ENCODE measurements at regions of chr3 and their contacts with region 1.

Region 1: DNA sequence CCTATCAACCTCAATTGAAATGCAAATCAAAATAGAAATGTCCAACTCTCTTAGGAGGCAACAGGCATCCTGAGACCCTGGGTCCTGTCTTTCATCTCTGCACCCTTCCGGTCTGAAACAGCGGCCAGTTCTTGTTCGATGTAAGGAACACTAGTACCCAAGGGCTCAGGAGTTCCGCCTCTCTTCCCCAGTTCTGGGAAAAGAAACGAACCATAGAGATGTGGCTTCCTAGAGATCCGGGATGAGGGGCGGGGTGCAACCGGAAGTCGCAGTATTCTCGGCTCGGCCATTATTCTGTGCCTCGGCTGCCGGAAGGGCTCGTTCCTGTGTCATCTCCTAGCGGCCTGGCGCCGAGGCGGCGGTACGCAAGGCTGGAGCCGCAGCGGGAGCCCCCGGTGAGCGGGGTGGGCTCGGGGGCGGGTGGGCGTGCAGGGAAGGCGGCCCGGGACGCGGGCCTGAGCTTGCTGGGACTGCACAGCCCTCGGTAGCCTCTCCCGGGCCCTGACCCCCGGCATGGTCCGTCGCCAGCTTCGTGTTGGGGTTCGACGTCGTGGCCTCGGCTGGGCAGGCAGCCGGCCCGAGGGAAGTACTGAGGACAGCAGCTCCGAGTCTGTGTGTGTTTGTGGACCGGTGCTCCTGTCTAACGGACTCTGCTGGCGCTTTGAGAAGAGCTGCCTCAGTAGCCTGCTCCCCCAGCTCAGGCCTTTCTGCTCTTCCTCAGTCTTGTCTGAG is at the start of gene ZNF197:
- DNase-seq: peak; percentile 87 to 88
- H3K4me3 ChIP-seq: peak within 1 kb of the TSS; percentile 76
- H3K4me3 Mint-ChIP-seq: peak within 1 kb of the TSS; percentile 76
- H3K27ac Mint-ChIP-seq: peak within 1 kb of the TSS; percentile 5
- H3K4me1 ChIP-seq: peaks cover 5% of the 10 kb centered on the region
- H3K4me1 Mint-ChIP-seq: no peaks in the 10 kb centered on the region
- H3K27me3 ChIP-seq: no peaks in the 10 kb centered on the region
- H3K27me3 Mint-ChIP-seq: no peaks in the 10 kb centered on the region
- CTCF ChIP-seq: peak in 1 of 2 experiments; percentile 4
- total RNA-seq, gene ZNF197: 10.5 and 10.6 TPM in 2 replicates

Region 2: GRCh38 chr3:44439499-44440295 is 185.2 kb before region 1 on chr3:
- CTCF ChIA-PET with region 1: no interaction called
- POLR2A ChIA-PET with region 1: no interaction called
- intact Hi-C with region 1: no loop called
- DNase-seq: no peak
- H3K4me3 ChIP-seq: no peak overlapping the region
- H3K4me3 Mint-ChIP-seq: no peak overlapping the region
- H3K27ac Mint-ChIP-seq: no peak overlapping the region
- H3K4me1 ChIP-seq: peaks cover 5% of the 10 kb centered on the region
- H3K4me1 Mint-ChIP-seq: no peaks in the 10 kb centered on the region
- H3K27me3 ChIP-seq: no peaks in the 10 kb centered on the region
- H3K27me3 Mint-ChIP-seq: no peaks in the 10 kb centered on the region
- CTCF ChIP-seq: no peak

Region 3: DNA sequence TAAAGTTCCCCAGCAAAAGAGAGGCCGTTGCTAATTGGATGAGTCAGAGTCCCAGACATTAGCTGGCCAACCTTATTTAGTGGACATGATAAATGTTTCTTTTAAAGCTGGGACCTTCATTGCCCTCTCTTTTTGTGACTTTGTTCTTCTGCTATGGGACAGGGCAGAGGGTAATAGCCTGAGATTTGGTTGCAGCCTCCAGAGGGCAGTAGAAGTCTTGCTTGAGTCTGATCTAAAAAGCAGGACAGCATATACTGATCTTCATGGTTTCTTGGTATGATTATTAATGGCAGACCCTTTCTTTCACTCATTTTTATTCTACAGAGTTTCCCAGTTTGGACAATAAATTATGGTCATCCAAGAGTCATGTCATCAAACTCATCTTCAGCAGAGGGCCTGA is 95.0 kb before region 1 on chr3:
- CTCF ChIA-PET with region 1: no interaction called
- POLR2A ChIA-PET with region 1: no interaction called
- intact Hi-C with region 1: loop called (anchors 10 kb)
- DNase-seq: peak in 1 of 2 experiments; percentile 7
- H3K4me3 ChIP-seq: no peak overlapping the region
- H3K4me3 Mint-ChIP-seq: no peak overlapping the region
- H3K27ac Mint-ChIP-seq: no peak overlapping the region
- H3K4me1 ChIP-seq: no peaks in the 10 kb centered on the region
- H3K4me1 Mint-ChIP-seq: no peaks in the 10 kb centered on the region
- H3K27me3 ChIP-seq: no peaks in the 10 kb centered on the region
- H3K27me3 Mint-ChIP-seq: peaks cover 1% of the 10 kb centered on the region
- CTCF ChIP-seq: no peak

Region 4: DNA sequence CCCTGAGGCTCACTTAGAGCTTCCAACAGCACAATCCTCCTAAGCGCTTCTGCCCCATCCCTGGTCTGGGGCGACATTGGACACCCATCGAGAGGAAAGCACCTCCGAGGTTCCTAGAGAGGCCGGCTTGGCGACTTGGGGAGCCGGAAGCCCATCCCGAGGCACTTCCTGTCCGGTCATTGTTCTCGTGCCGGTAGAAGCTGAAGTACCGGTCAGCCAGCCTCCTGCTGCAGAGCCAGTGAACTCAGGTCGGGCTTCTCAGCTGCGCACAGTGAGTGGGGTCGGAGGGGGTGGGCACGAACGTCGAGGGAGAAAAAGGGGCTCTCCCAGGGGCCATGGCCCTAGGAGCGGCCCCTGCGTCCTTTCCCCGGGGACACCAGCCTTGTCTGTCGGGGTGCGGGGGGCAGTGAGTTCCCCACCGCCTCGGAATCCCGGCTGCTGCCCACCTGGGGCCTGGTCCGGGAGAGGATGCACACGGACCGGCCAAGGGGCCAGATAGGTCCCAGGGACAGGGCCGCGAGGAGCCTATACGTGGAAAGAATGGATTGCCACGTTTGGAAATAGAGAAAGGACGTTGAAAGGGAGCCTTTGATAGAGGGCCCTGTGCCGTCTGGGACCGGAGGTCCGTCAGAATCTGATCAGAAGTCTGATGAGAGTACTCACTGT is 23.8 kb after region 1 on chr3 and contains the start of gene ZNF35:
- CTCF ChIA-PET with region 1: no interaction called
- POLR2A ChIA-PET with region 1: no interaction called
- intact Hi-C with region 1: loop called (anchors 1 kb)
- DNase-seq: peak; percentile 90 to 92
- H3K4me3 ChIP-seq: peak within 1 kb of the TSS; percentile 64
- H3K4me3 Mint-ChIP-seq: peak within 1 kb of the TSS; percentile 86
- H3K27ac Mint-ChIP-seq: peak within 1 kb of the TSS; percentile 87
- H3K4me1 ChIP-seq: no peaks in the 10 kb centered on the region
- H3K4me1 Mint-ChIP-seq: no peaks in the 10 kb centered on the region
- H3K27me3 ChIP-seq: no peaks in the 10 kb centered on the region
- H3K27me3 Mint-ChIP-seq: no peaks in the 10 kb centered on the region
- CTCF ChIP-seq: no peak
- total RNA-seq, gene ZNF35: 12.0 and 14.7 TPM in 2 replicates

Region 5: GRCh38 chr3:44712455-44713075 is 87.7 kb after region 1 on chr3 and contains the start of gene ZNF502:
- CTCF ChIA-PET with region 1: no interaction called
- POLR2A ChIA-PET with region 1: no interaction called
- intact Hi-C with region 1: loop called (anchors 1 kb)
- DNase-seq: peak; percentile 80 to 83
- H3K4me3 ChIP-seq: peak within 1 kb of the TSS; percentile 67
- H3K4me3 Mint-ChIP-seq: peak within 1 kb of the TSS; percentile 87
- H3K27ac Mint-ChIP-seq: peak within 1 kb of the TSS; percentile 85
- H3K4me1 ChIP-seq: no peaks in the 10 kb centered on the region
- H3K4me1 Mint-ChIP-seq: no peaks in the 10 kb centered on the region
- H3K27me3 ChIP-seq: no peaks in the 10 kb centered on the region
- H3K27me3 Mint-ChIP-seq: no peaks in the 10 kb centered on the region
- CTCF ChIP-seq: peak in 1 of 2 experiments; percentile 36
- total RNA-seq, gene ZNF502: 2.0 TPM in 2 replicates